Activated naive CD4-positive, alpha-beta T cell treated with anti-CD3 and anti-CD28 coated beads for 36 hours (primary cell): ENCODE measurements at regions of chr2 and their contacts with region 1.

Region 1: GRCh38 chr2:165401285-165401852 is 68.1 kb upstream of the CSRNP3 start:
- DNase-seq: peak; percentile 23
- H3K4me3 Mint-ChIP-seq: no peak overlapping the region
- H3K27ac Mint-ChIP-seq: no peak overlapping the region
- H3K4me1 Mint-ChIP-seq: peaks cover 6% of the 10 kb centered on the region
- H3K27me3 Mint-ChIP-seq: peaks cover 16% of the 10 kb centered on the region

Region 2: DNA sequence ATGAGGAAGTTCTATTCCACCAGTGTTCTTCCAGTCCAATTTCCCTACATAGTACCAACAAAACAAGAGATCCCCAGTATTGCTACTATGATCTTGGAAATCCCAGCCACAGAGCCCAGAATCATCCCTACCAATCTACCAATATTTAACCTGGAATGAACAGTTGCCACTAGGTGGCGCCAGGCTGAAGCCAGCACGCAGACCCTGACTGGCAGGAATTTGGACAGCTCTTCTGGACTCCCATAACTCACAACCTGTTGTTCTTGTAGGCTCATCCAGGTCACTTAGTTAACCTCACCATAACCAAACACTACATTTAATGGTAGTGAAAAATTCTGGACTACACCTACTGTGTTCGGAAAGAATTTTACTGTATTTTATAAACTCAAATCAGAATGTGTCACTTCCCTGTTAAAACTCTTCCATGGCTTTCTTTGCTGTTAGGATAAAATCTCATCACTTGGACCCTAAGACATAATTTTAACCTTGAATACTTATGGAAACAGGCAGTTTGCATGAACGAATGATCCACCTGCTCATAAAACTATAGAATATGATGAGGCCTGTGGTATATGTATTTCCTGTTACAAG is 386.2 kb before region 1 on chr2:
- CTCF ChIA-PET with region 1: no interaction called
- intact Hi-C with region 1: loop called (anchors 10 kb)
- DNase-seq: peak; percentile 74
- H3K4me3 Mint-ChIP-seq: no peak overlapping the region
- H3K27ac Mint-ChIP-seq: no peak overlapping the region
- H3K4me1 Mint-ChIP-seq: no peaks in the 10 kb centered on the region
- H3K27me3 Mint-ChIP-seq: peaks cover 9% of the 10 kb centered on the region

Region 3: DNA sequence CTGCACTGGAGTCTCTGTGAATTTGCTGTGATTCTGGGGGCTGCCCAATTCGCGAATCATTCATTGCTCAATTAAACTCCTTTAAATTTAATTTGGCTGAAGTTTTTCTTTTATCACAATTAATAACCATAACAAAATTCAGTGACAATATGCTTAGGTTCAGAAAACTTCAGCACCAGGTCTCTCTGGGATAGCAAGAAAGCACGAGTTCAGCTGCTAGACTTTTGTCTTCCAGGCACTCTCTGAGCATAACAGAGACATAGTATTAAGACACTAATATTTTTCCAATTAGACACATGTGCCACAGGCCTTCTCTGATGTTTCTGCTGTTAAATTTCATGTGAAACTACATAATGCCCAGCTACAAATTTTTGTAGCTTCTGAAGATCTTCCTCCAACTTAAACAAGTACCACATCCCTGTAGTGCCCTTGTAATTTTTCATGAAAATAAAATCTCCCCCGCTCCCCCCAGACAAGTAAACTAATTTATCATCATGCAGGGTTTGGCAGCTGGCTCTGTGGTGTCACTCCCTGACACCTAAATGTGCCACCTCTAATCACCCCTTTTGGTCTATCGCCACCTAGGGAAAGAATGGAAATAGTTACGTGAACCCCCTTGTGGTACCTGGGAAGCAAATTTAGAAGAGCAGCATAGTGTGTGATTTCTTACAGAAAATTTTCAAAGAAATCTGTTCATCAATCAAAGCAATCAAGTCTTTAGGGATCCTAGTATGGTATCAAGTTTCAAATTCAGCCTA is 162.3 kb after region 1 on chr2:
- CTCF ChIA-PET with region 1: interaction called, 3 read pairs
- intact Hi-C with region 1: loop called (anchors 1 kb)
- DNase-seq: no peak
- H3K4me3 Mint-ChIP-seq: no peak overlapping the region
- H3K27ac Mint-ChIP-seq: no peak overlapping the region
- H3K4me1 Mint-ChIP-seq: no peaks in the 10 kb centered on the region
- H3K27me3 Mint-ChIP-seq: peaks cover 8% of the 10 kb centered on the region

Region 4: GRCh38 chr2:165698444-165698894 is 297.1 kb after region 1 on chr2:
- CTCF ChIA-PET with region 1: interaction called, 4 read pairs
- intact Hi-C with region 1: loop called (anchors 1 kb)
- DNase-seq: peak; percentile 20
- H3K4me3 Mint-ChIP-seq: no peak overlapping the region
- H3K27ac Mint-ChIP-seq: no peak overlapping the region
- H3K4me1 Mint-ChIP-seq: no peaks in the 10 kb centered on the region
- H3K27me3 Mint-ChIP-seq: peaks cover 8% of the 10 kb centered on the region

Region 5: GRCh38 chr2:165778653-165779451 is 377.5 kb after region 1 on chr2:
- CTCF ChIA-PET with region 1: no interaction called
- intact Hi-C with region 1: loop called (anchors 1 kb)
- DNase-seq: peak; percentile 9
- H3K4me3 Mint-ChIP-seq: no peak overlapping the region
- H3K27ac Mint-ChIP-seq: no peak overlapping the region
- H3K4me1 Mint-ChIP-seq: no peaks in the 10 kb centered on the region
- H3K27me3 Mint-ChIP-seq: peaks cover 4% of the 10 kb centered on the region

Region 6: GRCh38 chr2:166106431-166107015 is 705.2 kb after region 1 on chr2:
- CTCF ChIA-PET with region 1: no interaction called
- intact Hi-C with region 1: loop called (anchors 5 kb)
- DNase-seq: no peak
- H3K4me3 Mint-ChIP-seq: no peak overlapping the region
- H3K27ac Mint-ChIP-seq: no peak overlapping the region
- H3K4me1 Mint-ChIP-seq: no peaks in the 10 kb centered on the region
- H3K27me3 Mint-ChIP-seq: no peaks in the 10 kb centered on the region

Region 7: DNA sequence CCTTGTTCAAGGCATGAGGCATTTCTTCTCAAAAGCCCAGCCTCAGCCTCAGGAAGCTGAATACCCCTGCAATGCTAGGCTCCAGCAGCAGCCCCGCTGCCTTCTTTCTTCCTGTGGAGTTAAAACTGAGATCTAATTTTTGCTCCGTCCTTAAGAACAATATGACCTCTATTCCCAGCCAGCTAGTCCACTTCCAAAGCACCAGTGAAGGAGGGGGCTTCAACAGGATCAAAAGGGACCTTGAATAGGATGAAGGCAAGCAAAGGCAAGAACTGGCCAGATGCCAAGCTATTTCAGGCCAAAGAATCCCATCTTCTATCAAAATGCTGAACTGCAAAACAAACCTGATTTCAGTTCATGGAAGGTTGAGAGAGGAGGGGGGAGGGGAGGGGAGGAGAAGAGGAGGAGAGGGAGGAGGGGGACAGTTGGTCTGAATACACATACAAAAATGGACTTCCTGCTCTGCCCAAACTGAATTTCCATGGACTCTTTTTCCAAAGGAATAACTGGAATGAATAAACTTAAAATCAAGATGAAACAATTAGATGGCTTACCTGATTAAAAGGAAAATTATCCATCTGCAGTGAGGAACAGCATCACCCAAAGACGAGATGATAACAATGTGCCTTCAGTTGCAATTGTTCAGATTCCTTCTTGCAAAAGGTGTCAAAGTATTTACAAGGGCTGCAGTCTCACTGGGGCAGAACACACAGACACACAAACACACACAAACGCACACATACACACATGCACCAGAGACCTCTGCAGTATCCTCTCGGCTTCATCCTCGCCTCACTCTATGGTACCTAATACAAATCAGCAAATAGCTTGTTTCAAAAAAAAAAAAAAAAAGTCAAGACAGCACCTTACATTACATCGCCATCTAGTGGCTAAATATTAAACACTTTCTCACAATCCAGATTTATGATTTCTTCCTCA is 726.1 kb after region 1 on chr2 and contains the start of gene SCN1A:
- CTCF ChIA-PET with region 1: no interaction called
- intact Hi-C with region 1: loop called (anchors 1 kb)
- DNase-seq: no peak
- H3K4me3 Mint-ChIP-seq: no peak within 1 kb of the TSS
- H3K27ac Mint-ChIP-seq: no peak within 1 kb of the TSS
- H3K4me1 Mint-ChIP-seq: peaks cover 2% of the 10 kb centered on the region
- H3K27me3 Mint-ChIP-seq: peaks cover 12% of the 10 kb centered on the region
- total RNA-seq, gene SCN1A: not detected

Region 8: DNA sequence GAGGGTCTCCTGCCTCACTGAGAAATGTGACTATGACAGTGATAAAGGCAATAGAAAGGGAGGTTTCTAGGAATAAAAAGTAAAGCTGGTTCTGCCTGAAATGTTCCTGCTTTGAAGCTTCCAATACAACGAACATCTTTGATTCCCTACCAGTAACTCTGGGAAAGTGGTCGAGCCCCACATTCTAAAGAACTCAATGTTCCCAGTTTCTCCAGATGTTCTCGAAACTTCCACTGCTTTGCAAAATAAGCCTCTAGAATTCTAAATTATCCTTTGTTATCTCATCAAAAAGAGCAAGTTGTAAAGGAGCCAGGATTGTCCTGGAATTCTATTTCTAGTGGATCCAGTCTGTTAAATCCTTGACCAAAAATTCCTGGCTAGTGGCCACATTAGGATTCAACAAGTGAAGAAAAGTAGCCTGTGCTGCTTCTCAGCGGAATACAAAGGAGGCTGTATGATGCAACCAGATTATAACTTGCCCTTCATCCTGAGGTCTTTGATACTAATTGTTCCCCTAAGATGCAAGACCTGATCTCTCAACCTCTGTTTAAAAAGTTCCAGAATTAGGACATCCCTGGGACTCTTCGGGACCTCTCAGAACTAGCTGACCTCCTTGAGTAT is 1084.3 kb after region 1 on chr2:
- CTCF ChIA-PET with region 1: no interaction called
- intact Hi-C with region 1: no loop called
- DNase-seq: no peak
- H3K4me3 Mint-ChIP-seq: no peak overlapping the region
- H3K27ac Mint-ChIP-seq: no peak overlapping the region
- H3K4me1 Mint-ChIP-seq: no peaks in the 10 kb centered on the region
- H3K27me3 Mint-ChIP-seq: no peaks in the 10 kb centered on the region